Breast epithelium (tissue), 4 donors: ENCODE measurements at regions of chr15 and their contacts with region 1.

Region 1: GRCh38 chr15:89139400-89140166 is 51.3 kb downstream of the ABHD2 start:
- DNase-seq: no peak
- H3K4me3 ChIP-seq: no peak overlapping the region
- H3K27ac ChIP-seq: peak overlapping the region in 1 of 2 donors; percentile 45
- H3K4me1 ChIP-seq: peaks cover 3 to 7% of the 10 kb centered on the region in 2 donors
- H3K27me3 ChIP-seq: no peaks in the 10 kb centered on the region
- CTCF ChIP-seq: peak in 1 of 3 donors; percentile 26
- POLR2A ChIP-seq: no peak

Region 2: DNA sequence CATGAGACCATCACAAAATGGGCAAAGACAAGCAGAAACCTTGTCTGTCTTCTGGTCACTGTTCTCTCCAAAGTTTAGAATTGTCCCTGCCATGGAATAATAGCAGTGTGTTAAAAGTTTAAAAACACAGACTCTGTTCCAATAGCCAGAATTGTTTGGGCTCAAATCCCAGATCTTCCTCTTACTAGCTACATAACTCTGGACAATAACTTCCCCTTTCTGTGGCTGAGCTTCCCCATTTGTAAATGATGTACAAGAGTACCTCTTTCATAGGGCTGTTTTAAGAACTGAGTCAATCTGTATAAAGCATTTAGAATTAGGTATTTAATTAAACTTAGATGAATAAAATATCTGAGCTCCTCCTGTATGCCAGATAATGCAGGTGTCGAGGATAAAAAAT is 1506.1 kb before region 1 on chr15:
- intact Hi-C with region 1: no loop called
- DNase-seq: no peak
- H3K4me3 ChIP-seq: no peak overlapping the region
- H3K27ac ChIP-seq: no peak overlapping the region
- H3K4me1 ChIP-seq: no peaks in the 10 kb centered on the region
- H3K27me3 ChIP-seq: no peaks in the 10 kb centered on the region
- CTCF ChIP-seq: no peak
- POLR2A ChIP-seq: no peak

Region 3: GRCh38 chr15:89068325-89068784 is 71.2 kb before region 1 on chr15:
- intact Hi-C with region 1: no loop called
- DNase-seq: peak in 1 of 2 donors; percentile 72
- H3K4me3 ChIP-seq: no peak overlapping the region
- H3K27ac ChIP-seq: peak overlapping the region in 1 of 2 donors; percentile 54
- H3K4me1 ChIP-seq: peaks cover 0 to 3% of the 10 kb centered on the region in 2 donors
- H3K27me3 ChIP-seq: no peaks in the 10 kb centered on the region
- CTCF ChIP-seq: no peak
- POLR2A ChIP-seq: no peak

Region 4: GRCh38 chr15:89114997-89115396 is 24.6 kb before region 1 on chr15:
- intact Hi-C with region 1: loop called (anchors 2 kb)
- DNase-seq: no peak
- H3K4me3 ChIP-seq: no peak overlapping the region
- H3K27ac ChIP-seq: peak overlapping the region; percentile 69 to 82
- H3K4me1 ChIP-seq: no peaks in the 10 kb centered on the region
- H3K27me3 ChIP-seq: no peaks in the 10 kb centered on the region
- CTCF ChIP-seq: no peak
- POLR2A ChIP-seq: no peak

Region 5: GRCh38 chr15:89177633-89178306 is 38.2 kb after region 1 on chr15:
- intact Hi-C with region 1: no loop called
- DNase-seq: no peak
- H3K4me3 ChIP-seq: no peak overlapping the region
- H3K27ac ChIP-seq: no peak overlapping the region
- H3K4me1 ChIP-seq: no peaks in the 10 kb centered on the region
- H3K27me3 ChIP-seq: no peaks in the 10 kb centered on the region
- CTCF ChIP-seq: peak; percentile 58 to 90 (median 76)
- POLR2A ChIP-seq: no peak